SK-N-SH (cell line): ENCODE measurements at regions of chr7 and their contacts with region 1.

Region 1: DNA sequence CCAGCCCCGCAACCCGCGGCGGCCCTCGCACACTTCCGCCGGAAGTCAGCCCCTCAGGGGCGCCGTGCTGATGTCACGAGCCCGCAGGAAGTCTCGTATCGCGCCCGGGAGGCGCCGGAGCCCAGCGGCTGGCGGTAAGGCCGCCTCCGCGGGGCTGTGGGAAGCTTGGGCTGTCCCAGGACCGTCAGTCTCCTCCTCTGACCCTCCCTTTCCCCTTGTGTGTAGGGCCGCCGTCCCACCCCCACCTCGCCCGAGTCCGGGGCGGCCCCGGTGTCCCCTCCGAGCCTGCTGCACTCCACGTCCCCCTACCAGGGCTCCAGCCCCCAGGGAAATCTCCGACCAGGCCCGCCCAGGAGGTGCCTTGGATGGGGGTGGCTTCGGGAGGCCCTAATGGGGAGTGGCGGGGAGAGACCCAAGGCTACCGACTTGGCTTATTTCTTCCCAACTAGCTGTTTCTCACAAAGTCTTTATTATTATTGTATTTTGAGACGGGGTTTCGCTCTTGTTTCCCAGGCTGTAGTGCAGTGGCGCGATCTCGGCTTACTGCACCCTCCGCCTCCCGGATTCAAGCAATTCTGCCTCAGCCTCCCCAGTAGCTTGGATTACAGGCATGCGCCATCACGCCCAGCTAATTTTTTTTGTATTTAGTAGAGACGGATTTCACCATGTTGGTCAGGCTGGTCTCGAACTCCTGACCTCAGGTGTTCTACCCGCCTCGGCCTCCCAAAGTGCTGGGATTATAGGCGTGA is at the start of gene ZDHHC4:
- DNase-seq: peak; percentile 99
- H3K4me3 ChIP-seq: peak within 1 kb of the TSS; percentile 62 to 87
- H3K27ac ChIP-seq: peak within 1 kb of the TSS; percentile 80 to 89
- H3K4me1 ChIP-seq: peaks cover 0 to 7% of the 10 kb centered on the region in 2 experiments; a peak in 1 of 4 replicates
- H3K27me3 ChIP-seq: no peaks in the 10 kb centered on the region
- CTCF ChIP-seq: no peak
- EP300 ChIP-seq: peak in 1 of 2 experiments; percentile 20; a peak in 1 of 4 replicates
- RAD21 ChIP-seq: no peak
- polyA plus RNA-seq, gene ZDHHC4: 169 and 178 TPM in 2 replicates

Region 2: DNA sequence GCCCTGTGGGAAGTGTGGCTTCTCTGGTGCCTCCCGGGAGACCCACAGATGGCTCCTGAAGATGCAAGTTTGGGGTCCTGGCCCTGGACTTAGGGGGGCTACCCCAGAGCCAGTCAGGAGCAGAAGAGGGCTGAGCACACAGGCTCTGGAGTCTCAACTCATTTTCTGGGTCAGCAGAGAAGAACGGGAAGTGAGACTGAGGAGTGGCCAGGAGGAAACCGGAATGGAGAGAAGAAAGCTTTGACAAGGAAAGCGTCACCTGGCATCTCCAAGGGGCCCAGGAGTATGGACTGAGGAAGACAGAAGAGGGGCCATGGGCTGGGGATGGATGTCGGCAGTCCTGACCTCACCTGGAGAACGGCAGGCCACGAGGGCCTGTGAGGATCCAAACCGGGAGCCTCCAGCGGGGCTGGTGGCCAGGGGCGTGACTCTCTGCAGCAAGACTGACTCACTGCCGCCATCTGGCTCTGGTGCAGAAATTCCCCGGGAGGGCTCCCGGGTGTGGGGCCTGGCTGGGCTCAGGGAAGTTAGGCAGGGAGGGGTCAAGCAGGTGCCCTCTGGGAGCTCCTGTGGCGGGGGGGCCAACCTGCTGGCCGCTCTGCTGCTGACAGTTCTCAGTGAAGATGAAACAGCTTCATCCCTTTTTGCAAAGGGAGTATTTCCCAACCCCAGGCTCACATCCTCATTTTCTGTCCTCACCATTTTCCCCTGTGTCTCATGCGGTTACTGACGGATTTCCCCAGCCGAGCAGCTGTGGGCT is 153.4 kb before region 1 on chr7:
- CTCF ChIA-PET with region 1: no interaction called
- POLR2A ChIA-PET with region 1: no interaction called
- DNase-seq: peak; percentile 44
- H3K4me3 ChIP-seq: no peak overlapping the region
- H3K27ac ChIP-seq: no peak overlapping the region
- H3K4me1 ChIP-seq: no peaks in the 10 kb centered on the region
- H3K27me3 ChIP-seq: no peaks in the 10 kb centered on the region
- CTCF ChIP-seq: no peak
- EP300 ChIP-seq: no peak
- RAD21 ChIP-seq: no peak

Region 3: DNA sequence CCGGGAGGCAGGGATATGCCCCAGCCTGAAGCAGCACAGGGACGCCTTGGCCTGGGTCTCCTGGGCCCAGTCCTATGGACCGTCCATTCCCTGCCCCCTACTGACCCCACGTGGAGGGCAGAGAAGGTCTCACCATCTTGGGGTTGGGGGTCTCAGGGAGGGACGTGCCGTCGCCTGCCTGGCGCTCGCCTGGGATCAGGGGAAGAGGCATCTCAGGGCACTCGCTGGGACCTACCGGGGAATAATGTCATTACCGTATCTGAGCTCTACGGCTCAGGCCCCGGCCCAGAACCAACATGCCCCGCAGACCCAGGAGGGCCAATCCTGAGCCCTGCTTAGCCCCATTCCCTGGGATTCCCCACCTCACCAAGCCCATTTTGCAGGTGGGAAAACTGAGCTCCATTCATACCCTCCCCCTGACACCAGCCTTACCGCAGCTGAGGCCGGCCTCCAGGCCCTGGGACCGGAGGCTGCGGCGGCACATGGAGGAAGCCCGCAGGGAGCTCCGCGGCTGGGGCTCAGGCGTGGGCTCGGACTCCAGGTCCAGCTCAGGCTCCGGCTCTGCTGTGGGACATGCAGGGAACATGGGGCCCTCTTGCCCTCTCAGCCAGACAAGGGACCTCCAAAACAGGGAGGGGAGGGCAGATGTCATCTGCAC is 66.9 kb before region 1 on chr7:
- CTCF ChIA-PET with region 1: interaction called, 85 read pairs
- POLR2A ChIA-PET with region 1: no interaction called
- DNase-seq: no peak
- H3K4me3 ChIP-seq: no peak overlapping the region
- H3K27ac ChIP-seq: no peak overlapping the region
- H3K4me1 ChIP-seq: no peaks in the 10 kb centered on the region; a peak in 1 of 4 replicates
- H3K27me3 ChIP-seq: peaks cover 8% of the 10 kb centered on the region; the same call in 1 of the 2 replicates
- CTCF ChIP-seq: no peak
- EP300 ChIP-seq: no peak
- RAD21 ChIP-seq: no peak

Region 4: GRCh38 chr7:6516387-6516983 is 61.1 kb before region 1 on chr7:
- CTCF ChIA-PET with region 1: interaction called, 85 read pairs
- POLR2A ChIA-PET with region 1: interaction called, 3 read pairs
- DNase-seq: peak; percentile 85
- H3K4me3 ChIP-seq: peak overlapping the region in 1 of 2 experiments; percentile 42; a peak in 2 of 4 replicates
- H3K27ac ChIP-seq: no peak overlapping the region
- H3K4me1 ChIP-seq: peaks cover 0 to 3% of the 10 kb centered on the region in 2 experiments; a peak in 1 of 4 replicates
- H3K27me3 ChIP-seq: peaks cover 6% of the 10 kb centered on the region; the same call in 1 of the 2 replicates
- CTCF ChIP-seq: peak; percentile 89
- EP300 ChIP-seq: no peak
- RAD21 ChIP-seq: peak; percentile 87